KBM-7 (cell line): ENCODE measurements at regions of chr22 and their contacts with region 1.

Region 1: GRCh38 chr22:36301384-36301828 is 48.5 kb downstream of the APOL1 start:
- DNase-seq: peak; percentile 74

Region 2: DNA sequence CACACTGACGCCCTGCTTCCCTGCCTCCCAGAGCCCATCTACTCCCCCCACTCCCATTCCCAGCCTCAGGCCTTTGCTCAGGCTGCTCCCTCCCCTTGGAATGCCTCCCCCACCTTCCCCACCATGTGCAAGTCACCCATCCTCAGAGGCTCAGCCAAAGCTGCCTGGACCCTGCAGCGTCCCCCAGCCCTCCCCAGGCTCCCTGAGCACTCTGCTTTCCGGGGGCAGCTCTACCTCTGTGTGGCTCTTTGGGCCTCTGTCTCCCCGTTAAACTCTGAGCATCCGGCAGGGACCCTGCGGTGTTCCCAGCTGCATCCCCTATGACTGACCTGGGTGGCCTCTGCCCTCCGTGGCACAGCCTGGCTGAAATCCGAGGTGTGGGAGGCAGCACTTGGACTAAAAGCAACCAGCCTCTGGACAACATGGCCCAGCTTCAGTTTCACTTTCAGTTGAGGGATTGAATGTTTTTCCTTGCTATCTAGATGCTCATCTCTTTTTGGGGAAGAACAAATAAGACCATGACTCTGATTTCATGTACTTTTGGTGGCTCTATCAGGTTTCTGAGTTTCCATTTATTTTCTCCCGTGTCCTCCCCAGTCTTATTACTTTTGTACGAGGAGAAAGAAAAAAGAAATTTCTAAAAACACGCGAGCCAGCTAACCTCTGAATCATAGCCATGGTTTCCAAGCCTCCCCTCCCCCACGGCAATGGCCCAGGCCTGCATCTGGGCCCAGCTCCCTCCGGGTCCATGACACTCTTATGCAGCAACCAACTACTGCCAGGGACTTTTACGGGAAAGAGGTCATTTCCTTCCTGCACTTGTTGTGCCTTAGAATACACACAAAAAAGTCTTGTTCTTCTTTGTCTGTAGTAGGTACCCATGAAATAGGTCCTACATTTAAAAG is 144.6 kb before region 1 on chr22:
- in situ Hi-C with region 1: no loop called
- DNase-seq: peak; percentile 65

Region 3: GRCh38 chr22:36194971-36195370 is 106.4 kb before region 1 on chr22:
- in situ Hi-C with region 1: no loop called
- DNase-seq: peak; percentile 82

Region 4: GRCh38 chr22:36461669-36462649 is 160.6 kb after region 1 on chr22:
- in situ Hi-C with region 1: loop called (anchors 10 kb)
- DNase-seq: no peak

Region 5: DNA sequence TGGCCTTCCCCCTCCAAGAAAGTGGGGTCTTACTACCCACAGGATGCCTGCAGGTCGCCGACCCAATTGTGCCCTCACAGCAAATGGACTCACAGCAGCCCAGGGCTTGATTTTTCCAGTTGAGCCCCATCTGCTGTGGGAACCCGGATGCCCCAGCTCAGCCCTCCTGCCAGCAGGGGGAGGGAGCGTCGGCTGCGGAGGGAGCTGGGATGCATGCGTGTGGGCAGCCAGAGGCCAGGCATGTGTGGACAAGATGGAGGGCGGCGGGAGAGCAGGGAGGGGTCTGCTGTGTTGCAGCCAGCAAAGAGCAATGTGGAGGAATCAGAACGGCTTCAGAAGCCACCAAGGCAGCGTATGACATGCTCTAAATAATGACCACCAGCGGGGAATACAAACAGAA is 268.6 kb after region 1 on chr22:
- in situ Hi-C with region 1: no loop called
- DNase-seq: no peak